Dendritic cell treated with granulocyte-macrophage colony-stimulating factor and Interleukin-4, amounts not matched to agents 40 ng/mL and 50 ng/mL, for 4 days (primary cell): ENCODE measurements at regions of chr16 and their contacts with region 1.

Region 1: DNA sequence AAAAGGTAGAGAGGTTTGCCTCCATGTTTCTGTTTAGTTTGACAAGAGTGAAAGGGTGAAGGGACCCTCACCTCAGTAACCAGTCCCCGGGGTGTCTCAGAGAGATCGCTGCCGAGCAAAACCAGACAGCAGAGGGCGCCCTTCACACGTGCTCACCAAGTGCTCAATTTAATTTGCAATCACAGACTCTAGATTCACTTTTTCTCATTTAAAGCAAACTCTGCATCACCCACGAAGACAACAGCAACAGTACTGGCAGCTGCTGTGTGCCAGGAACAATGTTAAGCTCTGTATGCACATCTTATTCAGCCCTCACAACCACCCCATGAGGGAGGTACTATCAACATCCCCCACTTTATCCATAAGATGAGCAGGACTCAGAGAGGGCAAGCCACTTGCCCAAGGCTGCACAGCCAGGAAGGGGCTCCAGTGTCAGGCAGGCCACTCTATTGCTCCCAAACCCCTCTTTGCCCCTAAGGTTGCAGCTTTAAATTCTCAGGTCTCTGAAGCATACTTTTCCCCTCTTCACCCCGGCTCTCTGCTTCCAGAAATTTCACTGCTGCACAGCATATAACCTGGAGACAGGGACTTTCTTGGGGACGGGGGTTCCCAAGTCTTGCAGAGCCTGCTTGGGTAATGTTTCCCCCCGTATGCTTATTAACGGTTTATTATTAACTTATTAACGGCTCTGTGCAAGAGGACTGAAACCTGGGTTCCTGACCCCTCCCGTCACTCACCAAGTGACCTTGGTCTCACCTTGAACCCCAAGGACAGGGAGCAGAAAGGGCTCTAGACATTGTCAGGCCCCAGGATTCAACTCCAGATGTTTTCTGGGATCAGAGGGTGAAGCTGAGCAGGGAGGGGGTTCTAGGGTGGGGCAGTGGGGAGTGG is 70.9 kb downstream of the CNGB1 start:
- H3K4me3 Mint-ChIP-seq: no peak overlapping the region
- H3K27ac Mint-ChIP-seq: no peak overlapping the region
- H3K4me1 Mint-ChIP-seq: peaks cover 40% of the 10 kb centered on the region
- H3K27me3 Mint-ChIP-seq: peaks cover 14% of the 10 kb centered on the region

Region 2: DNA sequence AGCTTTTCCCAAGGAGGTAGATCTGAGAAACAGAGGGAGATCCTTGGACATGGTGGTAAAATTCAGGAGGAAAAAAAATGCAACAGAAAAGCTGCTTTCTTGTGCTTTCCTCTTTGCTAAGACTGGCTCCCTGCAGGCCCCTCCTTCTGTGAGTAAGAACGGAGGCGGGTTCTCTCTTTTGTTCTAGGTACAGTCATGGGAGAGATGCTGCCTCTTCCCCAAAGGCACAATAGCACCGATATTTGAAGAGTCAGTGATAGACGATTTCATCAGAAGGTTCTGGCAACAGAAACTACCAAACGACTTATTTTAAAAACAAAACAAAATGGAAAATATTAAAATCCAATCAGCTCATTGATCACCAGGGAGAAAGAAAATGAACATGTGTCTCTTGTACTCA is 65.1 kb before region 1 on chr16:
- intact Hi-C with region 1: no loop called
- H3K4me3 Mint-ChIP-seq: no peak overlapping the region
- H3K27ac Mint-ChIP-seq: no peak overlapping the region
- H3K4me1 Mint-ChIP-seq: no peaks in the 10 kb centered on the region
- H3K27me3 Mint-ChIP-seq: peaks cover 13% of the 10 kb centered on the region

Region 3: DNA sequence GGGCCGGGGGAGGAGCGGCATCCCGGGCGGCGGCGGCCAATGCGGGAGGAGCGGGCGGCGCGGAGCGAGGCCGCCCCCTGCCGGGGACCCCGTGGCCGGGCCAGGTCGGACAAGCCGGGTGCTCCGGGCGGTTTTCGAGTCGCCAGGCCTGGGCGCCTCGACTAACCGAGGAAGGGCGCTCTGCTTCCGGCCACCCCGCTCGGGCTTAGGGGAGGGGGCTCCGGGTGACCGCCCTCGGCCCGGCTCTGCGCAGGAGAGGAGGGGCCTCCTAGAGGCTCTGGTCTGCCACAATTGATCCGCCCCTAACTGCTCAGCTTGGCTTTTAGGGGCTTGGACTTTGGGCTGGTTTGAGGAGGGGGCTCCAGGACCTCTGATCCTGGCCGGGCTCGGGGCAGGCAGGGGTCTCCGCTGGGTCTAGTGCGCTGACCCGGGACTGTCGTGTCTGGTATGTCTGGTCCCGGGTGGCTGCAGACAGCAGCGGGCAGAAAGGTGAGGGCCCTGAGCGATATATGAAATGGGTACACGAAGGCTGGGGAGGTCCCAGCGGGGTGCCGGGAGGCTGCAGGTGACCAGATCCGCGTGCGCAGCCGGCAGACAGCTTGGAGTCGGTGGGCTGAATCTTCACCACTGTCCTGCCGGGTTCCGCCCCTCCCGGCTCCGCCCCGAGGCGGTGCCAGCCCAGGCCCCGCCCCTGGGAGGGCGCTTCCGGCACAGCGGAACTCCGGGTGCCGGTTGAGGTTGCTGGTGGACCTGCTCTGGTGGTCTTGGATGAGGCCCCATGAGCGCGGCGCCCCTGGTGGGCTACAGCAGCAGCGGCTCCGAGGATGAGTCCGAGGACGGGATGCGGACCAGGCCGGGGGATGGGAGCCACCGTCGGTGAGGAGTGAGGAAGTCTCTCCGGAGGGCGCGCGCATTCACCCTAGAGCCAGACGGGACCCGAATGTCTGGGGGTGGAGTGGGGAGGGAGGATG is 101.0 kb after region 1 on chr16 and contains the start of gene USB1:
- intact Hi-C with region 1: loop called (anchors 2 kb)
- H3K4me3 Mint-ChIP-seq: peak within 1 kb of the TSS; percentile 97
- H3K27ac Mint-ChIP-seq: peak within 1 kb of the TSS; percentile 94
- H3K4me1 Mint-ChIP-seq: peaks cover 68% of the 10 kb centered on the region
- H3K27me3 Mint-ChIP-seq: no peaks in the 10 kb centered on the region

Region 4: GRCh38 chr16:58129097-58129936 is 229.3 kb after region 1 on chr16 and contains the start of gene CFAP20:
- intact Hi-C with region 1: loop called (anchors 10 kb)
- H3K4me3 Mint-ChIP-seq: peak within 1 kb of the TSS; percentile 71
- H3K27ac Mint-ChIP-seq: peak within 1 kb of the TSS; percentile 84
- H3K4me1 Mint-ChIP-seq: peaks cover 21% of the 10 kb centered on the region
- H3K27me3 Mint-ChIP-seq: no peaks in the 10 kb centered on the region